ENCODE measurements at regions of chr19 and their contacts with region 1.

Region 1: GRCh38 chr19:36837906-36838783 is at the start of gene ZNF790:
- DNase-seq: peak; percentile 94
- H3K4me3 Mint-ChIP-seq: no peak within 1 kb of the TSS
- H3K27ac Mint-ChIP-seq: peak within 1 kb of the TSS; percentile 49
- H3K4me1 Mint-ChIP-seq: peaks cover 4% of the 10 kb centered on the region
- H3K27me3 Mint-ChIP-seq: no peaks in the 10 kb centered on the region
- total RNA-seq, gene ZNF790: 5.1 and 6.7 TPM in 2 replicates

Region 2: GRCh38 chr19:36797786-36798108 is 40.4 kb before region 1 on chr19:
- intact Hi-C with region 1: loop called (anchors 1 kb)
- DNase-seq: no peak
- H3K4me3 Mint-ChIP-seq: peak overlapping the region; percentile 88
- H3K27ac Mint-ChIP-seq: peak overlapping the region; percentile 91
- H3K4me1 Mint-ChIP-seq: peaks cover 3% of the 10 kb centered on the region
- H3K27me3 Mint-ChIP-seq: no peaks in the 10 kb centered on the region